ENCODE measurements at regions of chr4 and their contacts with region 1.

Region 1: GRCh38 chr4:186979961-186980745 is 256.5 kb upstream of the FAT1 start:
- DNase-seq: no peak
- H3K4me3 ChIP-seq: no peak overlapping the region
- H3K27ac ChIP-seq: no peak overlapping the region
- H3K4me1 ChIP-seq: no peaks in the 10 kb centered on the region
- H3K27me3 ChIP-seq: no peaks in the 10 kb centered on the region
- CTCF ChIP-seq: no peak
- POLR2A ChIP-seq: no peak

Region 2: DNA sequence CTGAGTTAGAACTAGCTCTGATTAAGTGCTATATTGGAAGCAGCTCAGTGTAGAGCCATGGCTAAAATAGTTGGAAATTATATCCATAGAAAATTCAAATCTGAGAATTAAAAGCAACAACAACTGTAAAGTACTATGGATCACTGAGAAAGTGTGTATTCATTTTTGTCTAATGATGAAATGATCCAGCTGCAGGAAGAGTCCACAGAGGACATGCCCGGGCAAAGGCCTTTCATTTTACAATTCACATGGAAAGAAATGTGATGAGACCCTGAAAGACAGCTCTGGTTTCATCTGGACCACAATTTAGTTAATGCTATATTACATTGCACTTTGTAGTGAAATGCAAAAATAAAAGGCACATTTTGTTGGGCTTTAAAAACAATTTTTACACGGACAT is 59.7 kb before region 1 on chr4:
- intact Hi-C with region 1: no loop called
- DNase-seq: no peak
- H3K4me3 ChIP-seq: no peak overlapping the region
- H3K27ac ChIP-seq: peak overlapping the region; percentile 5 to 64
- H3K4me1 ChIP-seq: no peaks in the 10 kb centered on the region
- H3K27me3 ChIP-seq: no peaks in the 10 kb centered on the region
- CTCF ChIP-seq: no peak
- POLR2A ChIP-seq: no peak

Region 3: GRCh38 chr4:187814737-187815465 is 834.7 kb after region 1 on chr4:
- intact Hi-C with region 1: loop called (anchors 5 kb)
- DNase-seq: peak in 1 of 2 donors; percentile 32
- H3K4me3 ChIP-seq: peak overlapping the region in 2 of 3 donors; percentile 29 to 51
- H3K27ac ChIP-seq: peak overlapping the region in 1 of 2 donors; percentile 54
- H3K4me1 ChIP-seq: no peaks in the 10 kb centered on the region
- H3K27me3 ChIP-seq: no peaks in the 10 kb centered on the region
- CTCF ChIP-seq: no peak
- POLR2A ChIP-seq: no peak

Measured in breast epithelium (tissue), 4 donors.